CD4-positive, alpha-beta memory T cell (primary cell): ENCODE measurements at regions of chr4 and their contacts with region 1.

Region 1: DNA sequence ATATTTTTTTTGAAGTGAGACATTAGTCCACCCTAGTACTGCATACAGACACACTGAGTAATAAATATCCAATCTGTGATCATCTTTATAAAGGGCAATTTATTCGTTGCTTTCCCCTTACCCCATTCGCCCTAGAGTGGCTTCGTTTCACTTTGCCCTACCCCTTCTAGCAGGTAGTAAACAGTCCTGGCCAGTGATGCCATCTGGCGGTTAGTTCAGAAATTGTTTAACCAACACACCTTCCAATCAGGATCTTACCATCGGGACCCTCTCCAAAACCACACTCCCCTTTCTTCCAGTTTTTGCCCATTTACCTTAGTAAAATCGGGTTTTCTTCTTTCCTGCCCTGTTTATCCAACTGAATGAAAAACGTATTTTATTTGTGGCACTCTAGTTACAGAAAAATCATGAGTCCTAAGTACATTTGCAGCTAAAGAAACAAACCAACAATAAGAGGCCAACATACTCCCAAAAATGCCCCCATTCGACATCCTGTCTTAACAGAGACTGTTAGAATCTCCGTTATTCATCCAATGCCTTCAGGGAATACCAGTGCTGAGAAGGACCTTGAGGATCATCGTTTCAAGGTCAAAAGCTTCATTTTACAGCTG is 2.2 kb downstream of the PPA2 start:
- DNase-seq: peak; percentile 68 to 78 (median 73)
- H3K4me3 ChIP-seq: peak overlapping the region in 1 of 2 donors; percentile 25
- H3K4me3 Mint-ChIP-seq: peak overlapping the region; percentile 69 to 99 (median 90)
- H3K27ac ChIP-seq: peak overlapping the region; percentile 97
- H3K27ac Mint-ChIP-seq: peak overlapping the region; percentile 1 to 99 (median 69)
- H3K4me1 ChIP-seq: peaks cover 35% of the 10 kb centered on the region
- H3K4me1 Mint-ChIP-seq: peaks cover 38 to 73% (median 56%) of the 10 kb centered on the region in 4 donors
- H3K27me3 ChIP-seq: no peaks in the 10 kb centered on the region
- H3K27me3 Mint-ChIP-seq: peaks cover 0 to 2% of the 10 kb centered on the region in 2 donors

Region 2: DNA sequence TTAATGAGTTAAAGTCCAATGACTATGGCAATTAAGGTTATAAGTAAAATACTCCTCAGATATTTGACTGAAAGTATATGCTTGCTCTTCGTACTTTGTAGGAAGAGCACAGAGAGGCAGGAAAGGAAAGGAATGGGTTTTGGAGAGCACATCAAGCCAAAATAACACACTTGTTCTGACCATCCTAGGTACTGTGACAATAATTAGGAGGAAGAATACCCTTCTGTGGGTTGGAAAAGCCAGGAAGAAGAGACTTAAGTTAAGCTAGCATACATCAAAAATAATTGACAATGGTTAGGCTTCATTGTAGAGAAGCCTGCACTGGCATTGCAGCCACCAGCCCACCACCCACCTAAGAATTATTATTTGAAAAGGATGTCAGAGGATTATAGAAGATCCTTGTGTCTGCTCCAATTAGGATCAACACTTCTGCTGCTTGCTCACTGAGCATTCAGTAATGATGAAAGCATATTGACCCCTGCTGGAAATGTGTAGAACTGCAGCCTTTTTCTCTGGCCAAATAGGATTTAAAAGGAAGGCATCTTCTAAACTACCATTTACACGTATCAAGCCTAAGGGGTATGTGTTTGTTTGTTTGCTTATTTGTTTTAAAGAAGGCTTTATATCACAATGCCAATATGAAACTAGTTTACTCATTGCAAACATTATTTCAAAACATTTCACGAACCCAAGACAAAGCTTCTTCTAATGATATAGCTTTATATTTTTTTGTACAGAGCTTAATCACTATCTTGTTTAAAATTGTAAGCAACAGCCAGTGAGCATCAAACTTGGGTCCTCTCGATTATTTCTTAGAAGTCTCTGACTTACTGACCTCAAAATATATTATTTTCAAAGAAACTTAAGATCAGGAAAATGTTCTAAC is 611.2 kb before region 1 on chr4:
- CTCF ChIA-PET with region 1: interaction called, 4 read pairs
- POLR2A ChIA-PET with region 1: no interaction called
- intact Hi-C with region 1: loop called (anchors 2 kb)
- DNase-seq: peak; percentile 36 to 50 (median 42)
- H3K4me3 ChIP-seq: no peak overlapping the region
- H3K4me3 Mint-ChIP-seq: no peak overlapping the region
- H3K27ac ChIP-seq: no peak overlapping the region
- H3K27ac Mint-ChIP-seq: no peak overlapping the region
- H3K4me1 ChIP-seq: no peaks in the 10 kb centered on the region
- H3K4me1 Mint-ChIP-seq: no peaks in the 10 kb centered on the region
- H3K27me3 ChIP-seq: no peaks in the 10 kb centered on the region
- H3K27me3 Mint-ChIP-seq: no peaks in the 10 kb centered on the region

Region 3: DNA sequence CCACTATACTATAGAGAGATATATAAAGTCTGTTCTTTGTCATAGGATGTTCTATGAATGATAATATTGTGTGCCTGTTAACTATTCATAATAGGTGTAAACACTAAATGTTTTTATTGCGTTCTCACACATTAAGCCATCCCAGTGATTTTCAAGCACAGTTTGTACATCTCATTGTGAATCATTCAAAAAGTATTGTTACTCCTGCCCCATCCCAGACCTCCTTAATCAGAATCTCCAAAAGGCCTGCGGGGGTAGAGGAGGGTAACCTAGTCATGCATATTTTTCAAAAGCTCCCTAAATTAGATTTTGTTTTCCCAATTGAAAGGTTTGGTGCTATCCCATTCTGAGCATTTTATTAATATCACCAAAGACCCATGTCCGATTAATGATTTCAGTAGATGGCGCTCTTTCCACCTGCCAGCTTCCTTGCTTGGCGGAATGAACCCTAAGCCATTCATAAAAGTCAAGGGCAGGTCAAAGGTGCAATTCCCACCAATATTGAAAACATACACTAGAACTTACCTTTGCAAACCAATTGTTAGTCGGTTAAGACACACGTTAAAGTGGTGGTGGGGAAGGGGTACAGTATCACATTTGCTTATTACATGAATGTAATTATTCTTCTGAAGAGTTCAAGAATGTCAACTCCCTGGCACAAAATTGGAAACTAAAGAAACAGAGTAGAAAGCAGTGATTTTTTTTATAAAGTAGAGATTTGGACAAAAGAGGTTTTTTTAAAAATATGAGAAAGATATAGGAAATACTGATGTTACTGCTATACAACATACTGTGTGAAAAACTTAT is 330.8 kb before region 1 on chr4:
- CTCF ChIA-PET with region 1: interaction called, 51 read pairs
- POLR2A ChIA-PET with region 1: interaction called, 21 read pairs
- intact Hi-C with region 1: loop called (anchors 1 kb)
- DNase-seq: peak; percentile 39 to 63 (median 60)
- H3K4me3 ChIP-seq: no peak overlapping the region
- H3K4me3 Mint-ChIP-seq: no peak overlapping the region
- H3K27ac ChIP-seq: no peak overlapping the region
- H3K27ac Mint-ChIP-seq: peak overlapping the region in 1 of 7 donors; percentile 2
- H3K4me1 ChIP-seq: peaks cover 5% of the 10 kb centered on the region
- H3K4me1 Mint-ChIP-seq: peaks cover 7 to 12% (median 8%) of the 10 kb centered on the region in 4 donors
- H3K27me3 ChIP-seq: no peaks in the 10 kb centered on the region
- H3K27me3 Mint-ChIP-seq: no peaks in the 10 kb centered on the region

Region 4: GRCh38 chr4:105461221-105461620 is 10.4 kb before region 1 on chr4:
- CTCF ChIA-PET with region 1: interaction called, 55 read pairs
- POLR2A ChIA-PET with region 1: interaction called, 7 read pairs
- intact Hi-C with region 1: no loop called
- DNase-seq: no peak
- H3K4me3 ChIP-seq: no peak overlapping the region
- H3K4me3 Mint-ChIP-seq: no peak overlapping the region
- H3K27ac ChIP-seq: no peak overlapping the region
- H3K27ac Mint-ChIP-seq: no peak overlapping the region
- H3K4me1 ChIP-seq: no peaks in the 10 kb centered on the region
- H3K4me1 Mint-ChIP-seq: peaks cover 20 to 47% (median 24%) of the 10 kb centered on the region in 4 donors
- H3K27me3 ChIP-seq: no peaks in the 10 kb centered on the region
- H3K27me3 Mint-ChIP-seq: no peaks in the 10 kb centered on the region

Region 5: GRCh38 chr4:105683038-105683437 is 211.4 kb after region 1 on chr4:
- CTCF ChIA-PET with region 1: no interaction called
- POLR2A ChIA-PET with region 1: no interaction called
- intact Hi-C with region 1: no loop called
- DNase-seq: no peak
- H3K4me3 ChIP-seq: no peak overlapping the region
- H3K4me3 Mint-ChIP-seq: no peak overlapping the region
- H3K27ac ChIP-seq: no peak overlapping the region
- H3K27ac Mint-ChIP-seq: peak overlapping the region in 1 of 7 donors; percentile 6
- H3K4me1 ChIP-seq: no peaks in the 10 kb centered on the region
- H3K4me1 Mint-ChIP-seq: no peaks in the 10 kb centered on the region
- H3K27me3 ChIP-seq: no peaks in the 10 kb centered on the region
- H3K27me3 Mint-ChIP-seq: no peaks in the 10 kb centered on the region

Region 6: DNA sequence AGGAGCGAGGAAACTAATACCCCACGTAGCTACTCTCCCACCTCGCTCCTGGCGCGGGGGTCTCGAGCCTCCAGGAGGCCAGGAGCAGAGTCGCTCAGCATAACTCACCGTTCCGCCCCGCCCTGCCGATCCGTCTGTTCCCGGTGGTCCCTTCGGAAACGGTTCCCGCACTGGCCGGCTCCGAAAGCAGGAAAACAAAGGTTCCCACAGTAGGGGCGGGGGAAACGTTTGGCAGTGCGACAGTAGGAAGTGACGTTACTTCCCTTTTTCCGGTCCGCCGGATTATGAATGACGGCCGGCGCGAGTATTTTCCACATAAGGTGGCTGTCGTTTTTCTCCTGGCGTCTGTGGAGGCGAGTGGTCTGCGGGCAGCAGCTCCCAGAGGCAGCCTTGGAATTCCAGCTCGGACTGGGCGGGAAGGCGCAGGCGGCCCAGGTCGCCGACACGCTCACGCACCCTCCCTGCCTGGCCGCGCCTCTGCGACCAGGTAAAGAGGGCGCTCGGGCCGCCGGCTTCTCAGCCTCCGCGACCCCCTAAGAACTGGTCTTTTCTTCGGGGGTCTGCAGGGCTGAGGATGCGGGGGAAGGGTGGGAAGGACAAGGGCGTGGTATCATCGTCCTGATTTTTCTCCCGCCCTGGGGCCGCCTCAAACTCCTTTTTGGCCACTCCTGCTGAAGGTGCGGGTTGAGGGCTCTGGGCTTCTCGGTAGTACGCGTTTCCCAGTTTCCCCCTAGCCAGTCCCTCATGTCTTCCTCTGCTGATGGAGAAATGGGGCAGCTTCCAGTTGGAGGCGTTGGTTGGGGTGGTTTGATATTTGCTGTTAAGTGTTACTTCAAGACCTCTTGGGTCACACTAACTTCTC is 237.1 kb after region 1 on chr4 and contains the starts of genes GSTCD and INTS12:
- CTCF ChIA-PET with region 1: interaction called, 5 read pairs
- POLR2A ChIA-PET with region 1: interaction called, 7 read pairs
- intact Hi-C with region 1: loop called (anchors 1 kb)
- DNase-seq: peak; percentile 84 to 87 (median 86)
- H3K4me3 ChIP-seq: peak within 1 kb of the TSS; percentile 70 to 92
- H3K4me3 Mint-ChIP-seq: peak within 1 kb of the TSS; percentile 99 to 100 (median 100)
- H3K27ac ChIP-seq: peak within 1 kb of the TSS; percentile 65
- H3K27ac Mint-ChIP-seq: peak within 1 kb of the TSS; percentile 93 to 99 (median 98)
- H3K4me1 ChIP-seq: peaks cover 20% of the 10 kb centered on the region
- H3K4me1 Mint-ChIP-seq: peaks cover 23 to 45% (median 29%) of the 10 kb centered on the region in 4 donors
- H3K27me3 ChIP-seq: no peaks in the 10 kb centered on the region
- H3K27me3 Mint-ChIP-seq: no peaks in the 10 kb centered on the region
- total RNA-seq, gene GSTCD: 4.7 to 5.0 TPM
- total RNA-seq, gene INTS12: 16.6 to 17.5 TPM